ENCODE measurements at regions of chr5 and their contacts with region 1.

Region 1: GRCh38 chr5:134101686-134102439 is 12.6 kb upstream of the TCF7 start:
- DNase-seq: no peak

Region 2: GRCh38 chr5:132321109-132321721 is 1780.6 kb before region 1 on chr5:
- intact Hi-C with region 1: loop called in 1 of 2 experiments (anchors 5 kb)
- DNase-seq: no peak

Region 3: GRCh38 chr5:136047858-136048257 is 1946.0 kb after region 1 on chr5:
- intact Hi-C with region 1: loop called in 1 of 2 experiments (anchors 5 kb)
- DNase-seq: peak; percentile 83